Psoas muscle (tissue), 8 donors: ENCODE measurements at regions of chr13 and their contacts with region 1.

Region 1: DNA sequence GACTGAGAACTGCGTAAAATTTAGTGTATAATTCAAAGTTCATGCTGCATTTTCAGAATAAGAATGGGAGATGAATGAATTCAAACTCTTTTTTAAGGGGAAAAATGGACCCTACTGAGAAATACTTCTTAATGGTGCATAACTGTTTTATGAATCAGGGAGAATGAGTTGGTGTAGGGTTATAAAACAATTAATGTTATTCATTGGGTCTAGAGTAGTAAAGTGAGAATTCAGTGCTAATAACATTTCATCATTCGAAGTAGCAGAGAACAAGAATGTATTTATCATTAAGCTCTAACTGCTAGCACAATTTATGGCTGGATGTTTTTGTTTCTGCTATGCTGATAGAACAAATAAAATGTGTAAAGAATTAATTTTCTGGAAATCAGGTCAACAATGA is 310.2 kb downstream of the SLITRK5 start:
- DNase-seq: no peak
- ATAC-seq: no peak
- H3K4me3 ChIP-seq: no peak overlapping the region
- H3K27ac ChIP-seq: no peak overlapping the region
- H3K4me1 ChIP-seq: no peaks in the 10 kb centered on the region
- H3K27me3 ChIP-seq: no peaks in the 10 kb centered on the region
- CTCF ChIP-seq: no peak

Region 2: DNA sequence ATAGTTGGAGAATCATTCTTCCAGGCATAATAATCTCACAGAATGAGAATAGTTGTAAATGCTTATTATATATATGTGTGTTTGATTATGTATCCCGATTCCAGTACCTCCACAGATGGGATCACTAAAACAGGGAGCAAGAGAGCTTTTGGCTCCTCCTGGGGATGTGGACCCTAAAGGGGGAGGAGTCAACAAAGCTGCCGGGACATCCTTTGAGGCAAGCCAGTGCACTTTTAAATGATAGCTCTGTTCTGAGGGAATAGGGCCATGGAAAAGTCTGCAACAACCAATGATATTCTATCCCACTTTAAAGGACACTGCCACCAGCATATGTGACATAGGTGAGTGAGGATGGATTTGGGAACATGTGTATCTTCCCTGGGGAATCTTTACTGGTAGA is 269.4 kb before region 1 on chr13:
- intact Hi-C with region 1: no loop called
- DNase-seq: no peak
- ATAC-seq: no peak
- H3K4me3 ChIP-seq: no peak overlapping the region
- H3K27ac ChIP-seq: no peak overlapping the region
- H3K4me1 ChIP-seq: no peaks in the 10 kb centered on the region
- H3K27me3 ChIP-seq: no peaks in the 10 kb centered on the region
- CTCF ChIP-seq: no peak

Region 3: GRCh38 chr13:87878706-87879105 is 102.7 kb before region 1 on chr13:
- intact Hi-C with region 1: no loop called
- DNase-seq: no peak
- ATAC-seq: no peak
- H3K4me3 ChIP-seq: no peak overlapping the region
- H3K27ac ChIP-seq: no peak overlapping the region
- H3K4me1 ChIP-seq: no peaks in the 10 kb centered on the region
- H3K27me3 ChIP-seq: no peaks in the 10 kb centered on the region
- CTCF ChIP-seq: no peak

Region 4: GRCh38 chr13:89708013-89708412 is 1726.6 kb after region 1 on chr13:
- intact Hi-C with region 1: loop called in 1 of 2 experiments (anchors 5 kb)
- DNase-seq: no peak
- ATAC-seq: no peak
- H3K4me3 ChIP-seq: no peak overlapping the region
- H3K27ac ChIP-seq: no peak overlapping the region
- H3K4me1 ChIP-seq: no peaks in the 10 kb centered on the region
- H3K27me3 ChIP-seq: no peaks in the 10 kb centered on the region
- CTCF ChIP-seq: no peak